ENCODE measurements at regions of chrX and their contacts with region 1.

Region 1: DNA sequence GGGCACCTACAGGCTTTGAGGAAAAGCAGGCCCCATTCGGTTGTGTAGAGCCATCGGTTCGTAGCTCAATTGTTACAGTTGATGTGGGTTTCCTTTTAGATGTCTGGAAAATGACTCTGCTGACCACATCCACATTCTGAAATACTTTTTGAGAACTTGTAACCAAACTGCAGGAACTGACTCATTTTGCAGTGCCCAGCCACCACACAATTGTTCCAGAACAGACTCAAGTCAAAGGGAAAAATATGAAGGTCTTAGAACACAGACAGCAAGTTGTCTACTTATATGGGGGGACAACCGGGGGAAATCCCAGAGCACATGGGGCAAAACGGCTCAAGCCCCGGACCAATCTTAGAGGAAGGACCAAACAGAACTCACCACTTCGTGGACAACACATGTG is 557.6 kb upstream of the DIPK2B start:
- DNase-seq: peak; percentile 89
- H3K4me3 ChIP-seq: no peak overlapping the region
- H3K27ac ChIP-seq: peak overlapping the region; percentile 86
- H3K4me1 ChIP-seq: peaks cover 94% of the 10 kb centered on the region
- H3K27me3 ChIP-seq: no peaks in the 10 kb centered on the region
- CTCF ChIP-seq: no peak

Region 2: GRCh38 chrX:45621376-45622041 is 136.8 kb before region 1 on chrX:
- CTCF ChIA-PET with region 1: no interaction called
- dilution Hi-C with region 1: loop called (anchors 10 kb)
- in situ Hi-C with region 1: no loop called
- intact Hi-C with region 1: no loop called
- DNase-seq: peak; percentile 96
- H3K4me3 ChIP-seq: no peak overlapping the region
- H3K27ac ChIP-seq: peak overlapping the region; percentile 68
- H3K4me1 ChIP-seq: peaks cover 36% of the 10 kb centered on the region
- H3K27me3 ChIP-seq: no peaks in the 10 kb centered on the region
- CTCF ChIP-seq: no peak

Region 3: GRCh38 chrX:45843518-45843917 is 85.2 kb after region 1 on chrX:
- CTCF ChIA-PET with region 1: no interaction called
- dilution Hi-C with region 1: no loop called
- in situ Hi-C with region 1: no loop called
- intact Hi-C with region 1: loop called (anchors 5 kb)
- DNase-seq: no peak
- H3K4me3 ChIP-seq: no peak overlapping the region
- H3K27ac ChIP-seq: no peak overlapping the region
- H3K4me1 ChIP-seq: peaks cover 42% of the 10 kb centered on the region
- H3K27me3 ChIP-seq: no peaks in the 10 kb centered on the region
- CTCF ChIP-seq: peak; percentile 2 to 43

Region 4: DNA sequence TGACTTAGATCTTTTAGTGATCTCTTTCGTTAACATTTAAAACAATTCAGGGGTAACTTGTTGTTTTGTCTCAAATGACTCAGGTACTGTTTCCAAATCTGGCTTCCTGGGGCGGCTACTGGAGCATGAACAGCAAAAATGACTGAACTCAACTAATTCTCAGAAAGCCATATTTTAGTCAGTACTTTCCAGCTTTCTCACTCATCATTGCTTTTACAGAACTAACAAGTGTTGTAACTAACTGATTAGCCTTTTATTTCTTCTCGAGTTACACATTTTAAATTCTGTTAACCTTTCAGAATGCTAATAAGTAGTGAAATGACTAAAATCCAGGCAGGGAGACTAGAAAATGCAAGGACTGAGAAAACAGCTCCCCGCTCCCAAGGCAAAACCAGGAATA is 1209.2 kb after region 1 on chrX:
- CTCF ChIA-PET with region 1: no interaction called
- dilution Hi-C with region 1: no loop called
- in situ Hi-C with region 1: no loop called
- intact Hi-C with region 1: no loop called
- DNase-seq: no peak
- H3K4me3 ChIP-seq: no peak overlapping the region
- H3K27ac ChIP-seq: no peak overlapping the region
- H3K4me1 ChIP-seq: peaks cover 24% of the 10 kb centered on the region
- H3K27me3 ChIP-seq: no peaks in the 10 kb centered on the region
- CTCF ChIP-seq: no peak

Region 5: GRCh38 chrX:47650164-47651042 is 1892.1 kb after region 1 on chrX and contains the start of gene ELK1:
- CTCF ChIA-PET with region 1: interaction called, 21 read pairs
- dilution Hi-C with region 1: no loop called
- in situ Hi-C with region 1: no loop called
- intact Hi-C with region 1: no loop called
- DNase-seq: peak; percentile 97
- H3K4me3 ChIP-seq: peak within 1 kb of the TSS; percentile 52 to 77 (median 68)
- H3K27ac ChIP-seq: peak within 1 kb of the TSS; percentile 36
- H3K4me1 ChIP-seq: peaks cover 14% of the 10 kb centered on the region
- H3K27me3 ChIP-seq: no peaks in the 10 kb centered on the region
- CTCF ChIP-seq: no peak
- total RNA-seq, gene ELK1: 17.2 to 44.7 TPM